AG04449 (cell line): ENCODE measurements at regions of chr11 and their contacts with region 1.

Region 1: DNA sequence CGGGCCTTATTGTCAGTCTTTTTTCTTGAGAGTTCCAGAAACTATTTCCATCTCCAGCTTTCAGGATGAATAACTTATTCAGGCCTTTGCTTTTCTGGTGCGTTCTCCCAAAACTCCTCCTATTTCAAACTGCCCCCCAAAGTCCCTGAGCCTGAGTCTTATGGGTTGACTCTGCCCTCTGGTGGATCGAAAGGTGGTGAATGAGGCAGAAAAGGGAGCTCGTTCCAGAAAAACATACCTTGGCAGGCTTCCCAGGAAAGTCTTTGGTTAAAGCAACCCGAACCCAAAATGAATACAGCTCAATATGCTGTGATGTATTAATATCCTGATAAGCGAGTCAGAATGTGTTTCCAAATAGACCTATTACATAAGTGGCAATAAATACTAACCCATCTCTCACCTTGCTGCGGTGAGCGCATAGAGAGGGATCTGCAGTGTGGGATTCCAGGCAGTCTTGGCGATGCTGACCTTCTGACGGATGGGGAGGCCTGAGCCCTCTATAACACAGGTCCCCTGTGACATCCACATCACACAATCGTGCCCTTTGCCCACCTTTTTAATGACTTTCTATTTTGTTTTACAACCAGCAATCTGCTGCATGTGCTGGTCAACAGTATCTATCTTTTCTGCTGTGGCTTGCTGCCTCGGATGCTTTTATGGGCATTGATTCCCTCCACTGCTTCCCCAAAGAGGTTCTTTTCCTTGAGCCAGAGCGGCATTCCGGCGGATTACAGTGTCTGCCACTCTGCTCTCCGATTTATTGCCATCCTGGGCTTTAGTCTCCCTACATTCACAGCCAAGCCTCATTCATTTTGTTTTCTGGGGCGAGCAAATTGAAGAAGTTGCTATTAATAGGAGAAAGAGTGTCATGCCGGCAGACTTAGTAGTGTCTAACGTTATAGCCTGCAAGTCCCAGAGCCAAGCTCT is 756.8 kb downstream of the NTM start:
- DNase-seq: peak; percentile 68
- H3K4me3 ChIP-seq: no peak overlapping the region
- CTCF ChIP-seq: peak; percentile 78

Region 2: DNA sequence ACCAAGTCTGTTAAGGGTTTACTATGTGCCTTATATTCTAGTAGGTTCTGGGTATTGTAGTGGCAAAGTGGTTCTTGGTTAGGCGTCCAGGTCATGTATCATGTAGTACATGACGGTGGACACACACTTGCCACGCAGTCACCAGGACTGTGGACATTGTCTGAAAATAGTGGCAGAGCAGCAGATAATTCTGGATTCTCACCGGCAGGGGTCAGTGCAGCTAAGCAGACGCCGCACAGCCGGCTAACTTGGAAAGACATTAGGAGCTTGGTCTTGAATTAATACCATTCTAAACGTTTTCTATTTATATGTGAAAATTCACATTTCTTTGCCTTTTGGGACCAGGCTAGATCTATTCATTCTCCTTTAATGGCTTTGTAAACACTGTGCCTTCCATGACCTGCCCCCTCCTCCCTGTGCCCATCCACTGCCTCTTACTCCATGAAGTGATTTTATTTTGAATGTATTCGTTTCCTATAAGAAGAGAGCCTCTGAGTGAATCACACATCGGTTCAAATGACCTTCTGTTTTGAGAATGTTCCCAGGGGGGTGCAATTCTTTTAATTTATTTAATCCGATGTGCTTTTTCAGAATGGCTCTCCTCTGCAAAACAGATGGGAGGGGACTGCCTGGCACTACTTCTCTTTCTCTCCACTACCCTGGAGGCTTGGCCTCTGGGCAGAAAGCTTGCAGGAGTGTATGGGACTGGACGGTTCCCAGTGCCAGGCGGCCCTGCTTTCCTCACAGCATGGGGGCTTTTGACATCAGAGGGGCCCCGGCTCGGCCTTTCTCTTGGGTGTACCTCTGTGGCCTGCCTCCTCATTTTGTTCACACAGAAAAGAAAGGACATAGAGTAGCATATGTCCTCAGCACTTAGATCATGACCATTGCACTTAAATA is 378.8 kb before region 1 on chr11:
- CTCF ChIA-PET with region 1: interaction called, 25 read pairs
- POLR2A ChIA-PET with region 1: interaction called, 7 read pairs
- DNase-seq: no peak
- H3K4me3 ChIP-seq: no peak overlapping the region; the same call in 1 of the 2 replicates
- CTCF ChIP-seq: peak; percentile 80

Region 3: GRCh38 chr11:131910523-131911387 is 216.5 kb before region 1 on chr11:
- CTCF ChIA-PET with region 1: interaction called, 127 read pairs
- POLR2A ChIA-PET with region 1: interaction called, 6 read pairs
- DNase-seq: no peak
- H3K4me3 ChIP-seq: peak overlapping the region; percentile 82
- CTCF ChIP-seq: no peak

Region 4: DNA sequence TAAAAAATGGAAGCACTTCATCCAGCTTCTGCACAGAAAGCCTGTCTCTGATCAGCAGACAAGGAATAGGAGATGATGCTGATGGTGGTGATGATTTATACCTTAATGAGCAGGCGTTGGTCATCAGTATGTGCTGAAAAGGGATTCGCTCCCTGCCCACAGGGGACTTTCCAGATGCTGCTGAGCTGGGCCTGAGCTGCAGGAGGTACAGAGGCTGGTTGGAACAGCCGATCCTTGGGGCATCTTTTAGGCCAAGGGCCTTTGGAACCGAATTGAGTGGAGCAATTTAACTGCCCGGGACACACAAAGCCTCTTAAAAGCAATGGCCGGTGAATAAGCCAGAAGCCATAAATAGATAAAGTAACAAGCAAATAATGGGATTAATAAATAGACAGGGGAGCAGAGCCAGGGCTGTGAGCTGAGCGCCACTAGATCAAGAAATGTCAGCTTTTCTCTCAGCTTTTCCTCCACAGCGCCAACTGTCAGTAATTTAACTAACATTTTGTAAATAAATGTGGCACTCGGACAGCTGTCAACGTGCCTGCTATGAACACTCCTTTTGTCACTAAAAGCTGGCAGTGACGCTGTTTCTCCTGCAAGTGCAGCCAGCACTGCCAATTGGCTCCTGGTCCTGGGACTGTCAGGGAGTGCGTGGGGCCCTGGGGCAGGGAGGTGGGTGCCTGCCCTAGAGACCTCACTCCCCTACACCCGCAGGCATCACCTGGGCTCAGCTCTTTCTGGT is 194.5 kb before region 1 on chr11:
- CTCF ChIA-PET with region 1: no interaction called
- POLR2A ChIA-PET with region 1: no interaction called
- DNase-seq: no peak
- H3K4me3 ChIP-seq: no peak overlapping the region
- CTCF ChIP-seq: no peak

Region 5: DNA sequence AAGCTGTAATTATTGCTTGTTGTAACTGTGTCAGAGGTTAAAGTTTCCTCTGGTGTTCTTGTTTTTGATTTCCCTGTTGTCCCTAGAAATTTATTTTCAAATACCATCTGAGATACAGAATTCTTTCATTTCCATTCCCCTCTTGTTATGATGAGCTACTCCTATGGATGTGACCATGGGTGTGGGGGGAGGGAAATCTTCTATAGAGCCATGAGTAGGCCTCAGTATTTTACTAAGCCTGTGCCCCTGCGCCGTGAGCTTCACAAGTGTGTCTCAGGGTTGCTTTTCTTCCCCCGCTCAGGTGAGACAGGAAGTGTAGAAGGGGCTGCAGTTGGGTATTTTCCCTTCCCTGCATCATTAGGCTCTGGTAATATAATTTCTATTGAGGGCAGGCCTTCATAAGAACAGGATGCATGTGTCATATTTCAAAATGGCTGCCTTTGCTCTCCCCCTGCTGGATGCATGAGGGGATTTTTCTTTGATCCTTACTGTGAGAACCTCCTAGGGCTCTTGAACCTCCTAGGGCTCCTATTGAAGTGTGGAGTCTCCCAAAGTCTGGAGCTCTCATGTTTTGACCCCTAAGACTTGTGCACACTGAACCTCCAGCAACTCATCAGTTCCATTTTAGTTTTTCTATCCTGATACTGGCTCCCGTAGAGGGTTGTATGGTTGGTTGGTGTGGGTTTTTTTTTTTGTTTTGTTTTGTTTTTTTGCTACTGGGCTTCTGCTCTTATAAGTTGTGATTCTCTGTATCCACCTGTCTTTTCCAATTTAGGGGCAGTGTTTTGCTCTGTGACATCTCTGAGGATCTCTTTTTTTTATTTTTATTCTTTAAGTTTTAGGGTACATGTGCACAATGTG is 98.6 kb before region 1 on chr11:
- CTCF ChIA-PET with region 1: interaction called, 12 read pairs
- POLR2A ChIA-PET with region 1: no interaction called
- DNase-seq: no peak
- H3K4me3 ChIP-seq: no peak overlapping the region
- CTCF ChIP-seq: peak; percentile 61

Region 6: DNA sequence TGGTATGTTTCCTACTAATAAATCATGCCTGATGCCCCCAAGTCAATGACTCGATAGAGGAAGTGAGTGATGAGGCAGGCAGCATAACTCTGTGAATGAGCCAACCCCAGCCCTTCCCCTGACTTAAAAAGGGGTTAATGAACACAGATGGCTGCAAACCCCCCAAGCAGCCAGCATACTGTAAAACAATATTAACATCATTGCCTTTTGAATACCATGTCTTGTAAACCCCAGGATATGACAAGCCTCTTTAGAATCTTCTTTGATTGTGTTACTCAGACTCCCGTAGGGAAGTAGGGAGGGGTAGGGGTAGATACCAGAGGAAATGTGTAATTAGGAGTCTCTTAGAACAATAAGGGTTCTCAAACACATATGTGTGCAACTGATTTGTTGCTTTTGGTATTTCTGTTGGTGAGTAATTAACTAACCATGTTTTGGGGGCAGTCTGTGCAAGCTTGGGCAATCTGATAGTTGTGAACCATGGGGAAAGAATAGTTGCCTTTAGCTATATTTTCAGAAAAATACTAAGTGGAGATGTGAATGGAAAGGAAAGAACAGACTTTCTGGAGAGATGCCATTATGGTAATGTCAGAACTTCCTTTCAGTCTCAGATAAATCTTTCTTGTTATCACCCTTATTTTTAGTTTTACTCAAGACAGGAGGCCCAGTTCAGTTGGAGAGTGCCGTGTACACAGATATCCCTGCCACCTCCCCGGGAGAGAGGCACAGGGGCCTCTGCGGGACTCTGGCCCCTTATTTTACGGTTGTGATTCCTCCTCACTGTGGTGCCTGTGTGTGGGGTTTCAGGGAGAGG is 55.0 kb before region 1 on chr11:
- CTCF ChIA-PET with region 1: interaction called, 14 read pairs
- POLR2A ChIA-PET with region 1: interaction called, 8 read pairs
- DNase-seq: peak; percentile 99
- H3K4me3 ChIP-seq: peak overlapping the region; percentile 15
- CTCF ChIP-seq: no peak

Region 7: GRCh38 chr11:132114185-132114584 is 13.1 kb before region 1 on chr11:
- CTCF ChIA-PET with region 1: interaction called, 34 read pairs
- POLR2A ChIA-PET with region 1: interaction called, 6 read pairs
- DNase-seq: no peak
- H3K4me3 ChIP-seq: no peak overlapping the region
- CTCF ChIP-seq: peak; percentile 39